Kidney (tissue), 22 donors: ENCODE measurements at regions of chr13 and their contacts with region 1.

Region 1: GRCh38 chr13:26062844-26063444 is 11.1 kb upstream of the SHISA2 start:
- DNase-seq: peak in 3 of 5 donors; percentile 61 to 90 (median 85)
- H3K4me3 ChIP-seq: no peak overlapping the region
- H3K27ac ChIP-seq: no peak overlapping the region
- H3K4me1 ChIP-seq: peaks cover 0 to 3% (median 0%) of the 10 kb centered on the region in 3 donors
- H3K27me3 ChIP-seq: no peaks in the 10 kb centered on the region
- CTCF ChIP-seq: peak; percentile 73

Region 2: DNA sequence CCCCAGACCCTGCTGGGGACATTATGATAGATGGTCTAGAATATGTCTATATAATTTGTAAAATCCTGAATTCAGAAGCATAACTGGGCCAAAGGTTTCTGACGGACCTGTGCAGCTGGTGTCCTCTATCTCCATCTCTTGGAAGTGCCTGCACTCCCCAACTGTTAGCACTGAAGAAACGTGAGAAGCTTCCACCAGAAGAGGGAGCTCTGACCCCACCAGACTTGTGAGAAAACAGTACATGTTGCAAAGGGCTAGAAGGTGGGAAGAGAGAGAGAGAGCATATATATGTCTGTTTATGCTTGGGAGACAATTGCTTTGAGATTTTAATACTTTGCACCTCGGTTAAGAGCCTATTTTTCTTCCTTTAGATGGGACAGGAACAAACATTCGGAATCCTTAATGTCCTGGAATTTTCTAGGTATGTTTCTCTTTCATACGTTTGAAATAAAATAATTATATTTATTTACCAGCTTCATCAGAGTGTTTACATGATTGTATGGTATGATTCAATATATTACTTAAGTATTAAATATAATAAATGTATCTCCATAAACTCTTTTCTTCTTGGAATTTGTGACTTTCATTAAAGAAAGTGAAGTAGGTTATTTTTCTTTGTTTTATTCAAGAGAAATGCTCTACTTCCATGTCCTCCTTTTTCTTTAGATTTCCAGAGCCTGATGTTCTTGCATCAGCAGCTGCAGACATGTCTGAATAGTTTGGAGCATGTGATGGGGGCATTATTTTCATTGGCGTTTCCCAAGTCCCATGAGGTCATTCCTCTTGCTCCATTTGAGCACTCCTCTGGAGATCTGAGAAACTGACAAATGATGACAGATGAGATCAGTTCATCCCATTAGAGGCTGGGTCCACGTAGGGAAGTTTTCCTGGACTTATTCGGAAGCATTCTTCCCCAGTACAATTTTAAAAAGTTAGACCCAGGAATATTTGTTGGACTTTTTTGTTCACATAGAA is 488.2 kb before region 1 on chr13:
- intact Hi-C with region 1: loop called (anchors 5 kb)
- DNase-seq: peak in 4 of 5 donors; percentile 93 to 98 (median 95)
- H3K4me3 ChIP-seq: no peak overlapping the region
- H3K27ac ChIP-seq: no peak overlapping the region
- H3K4me1 ChIP-seq: no peaks in the 10 kb centered on the region
- H3K27me3 ChIP-seq: no peaks in the 10 kb centered on the region
- CTCF ChIP-seq: peak; percentile 83

Region 3: GRCh38 chr13:25806264-25806974 is 256.5 kb before region 1 on chr13:
- intact Hi-C with region 1: no loop called
- DNase-seq: no peak
- H3K4me3 ChIP-seq: no peak overlapping the region
- H3K27ac ChIP-seq: no peak overlapping the region
- H3K4me1 ChIP-seq: no peaks in the 10 kb centered on the region
- H3K27me3 ChIP-seq: no peaks in the 10 kb centered on the region
- CTCF ChIP-seq: no peak

Region 4: DNA sequence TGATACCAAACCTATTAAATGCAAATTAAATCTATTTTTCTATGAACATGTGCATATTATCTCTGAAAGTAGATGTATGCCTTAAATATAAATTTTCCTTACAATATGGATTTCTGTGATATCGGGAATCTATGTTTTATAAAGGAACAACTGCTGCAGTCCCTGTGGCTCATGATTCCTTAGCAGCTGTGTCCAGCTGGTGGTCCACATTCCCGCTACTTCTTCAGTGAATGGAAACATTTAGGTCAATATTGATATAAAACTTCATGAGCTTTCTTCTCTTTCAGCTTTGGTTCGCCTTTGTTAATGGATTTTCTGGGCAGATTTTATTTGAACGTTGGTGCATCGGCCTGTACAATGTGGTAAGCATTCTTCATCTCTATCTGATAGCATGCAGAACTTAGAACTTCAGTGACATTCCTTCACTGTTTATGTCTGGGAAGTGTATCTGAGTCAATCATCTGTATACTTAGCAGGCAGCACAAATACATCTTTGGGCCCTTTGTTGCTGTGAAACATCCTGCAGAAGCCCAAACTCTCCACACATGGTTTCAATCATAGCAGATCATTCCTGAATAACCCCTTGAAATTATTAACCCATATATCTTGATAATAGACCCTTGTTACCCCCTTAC is 235.0 kb before region 1 on chr13:
- intact Hi-C with region 1: no loop called
- DNase-seq: peak in 4 of 5 donors; percentile 62 to 93 (median 70)
- H3K4me3 ChIP-seq: no peak overlapping the region
- H3K27ac ChIP-seq: no peak overlapping the region
- H3K4me1 ChIP-seq: peaks cover 0 to 4% (median 0%) of the 10 kb centered on the region in 3 donors
- H3K27me3 ChIP-seq: no peaks in the 10 kb centered on the region
- CTCF ChIP-seq: no peak

Region 5: GRCh38 chr13:26007261-26008125 is 55.5 kb before region 1 on chr13:
- intact Hi-C with region 1: no loop called
- DNase-seq: no peak
- H3K4me3 ChIP-seq: no peak overlapping the region
- H3K27ac ChIP-seq: no peak overlapping the region
- H3K4me1 ChIP-seq: no peaks in the 10 kb centered on the region
- H3K27me3 ChIP-seq: no peaks in the 10 kb centered on the region
- CTCF ChIP-seq: no peak